Activated T-helper 2 cell treated with anti-CD3 and anti-CD28 coated beads, Interferon-gamma antibody, Interleukin-2, Interleukin-4, amounts not matched to agents 10 μg/mL and 5 μg/mL and 100 μg/mL, durations not matched to agents 14 hours and 24 hours and 36 hours (primary cell): ENCODE measurements at regions of chr17 and their contacts with region 1.

Region 1: GRCh38 chr17:80761110-80761871 is 216.7 kb downstream of the RPTOR start:
- DNase-seq: peak; percentile 73
- H3K4me3 Mint-ChIP-seq: peak overlapping the region; percentile 66
- H3K27ac Mint-ChIP-seq: peak overlapping the region; percentile 99
- H3K4me1 Mint-ChIP-seq: peaks cover 72% of the 10 kb centered on the region
- H3K27me3 Mint-ChIP-seq: no peaks in the 10 kb centered on the region

Region 2: DNA sequence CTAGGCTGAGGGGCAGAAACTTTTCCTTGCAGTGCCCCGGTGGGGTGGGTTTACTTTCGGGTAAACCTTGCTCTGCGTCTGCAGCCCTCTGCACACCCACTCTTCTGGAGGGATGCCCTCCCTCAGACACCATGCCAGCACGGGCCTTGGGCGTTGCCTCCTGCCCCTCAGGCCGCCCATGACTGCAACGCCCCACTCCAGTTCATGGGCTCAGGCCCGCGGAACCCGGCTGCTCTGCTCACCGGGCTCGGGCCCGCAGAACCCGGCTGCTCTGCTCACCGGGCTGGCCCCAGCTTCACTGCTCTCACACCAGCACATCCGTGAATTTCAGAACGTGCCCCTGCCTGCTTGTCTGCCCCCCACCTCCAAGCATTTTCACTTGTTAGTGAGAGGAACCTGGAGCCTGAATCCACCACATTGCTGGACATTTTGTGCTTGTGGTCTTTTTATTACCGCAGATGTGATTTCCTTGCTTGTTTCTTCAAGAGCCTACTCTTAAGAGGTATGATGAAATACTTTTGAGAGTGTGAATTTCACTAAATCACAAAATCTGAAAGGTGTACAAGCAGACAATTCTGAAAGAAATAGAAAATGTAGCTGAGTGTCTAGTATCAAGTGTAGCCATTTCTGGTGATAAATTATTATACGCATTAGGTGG is 85.7 kb before region 1 on chr17:
- intact Hi-C with region 1: loop called (anchors 2 kb)
- DNase-seq: no peak
- H3K4me3 Mint-ChIP-seq: no peak overlapping the region
- H3K27ac Mint-ChIP-seq: peak overlapping the region; percentile 4
- H3K4me1 Mint-ChIP-seq: peaks cover 64% of the 10 kb centered on the region
- H3K27me3 Mint-ChIP-seq: no peaks in the 10 kb centered on the region

Region 3: GRCh38 chr17:80720610-80721577 is 40.4 kb before region 1 on chr17:
- intact Hi-C with region 1: no loop called
- DNase-seq: peak; percentile 59
- H3K4me3 Mint-ChIP-seq: peak overlapping the region; percentile 2
- H3K27ac Mint-ChIP-seq: peak overlapping the region; percentile 77
- H3K4me1 Mint-ChIP-seq: peaks cover 48% of the 10 kb centered on the region
- H3K27me3 Mint-ChIP-seq: no peaks in the 10 kb centered on the region

Region 4: DNA sequence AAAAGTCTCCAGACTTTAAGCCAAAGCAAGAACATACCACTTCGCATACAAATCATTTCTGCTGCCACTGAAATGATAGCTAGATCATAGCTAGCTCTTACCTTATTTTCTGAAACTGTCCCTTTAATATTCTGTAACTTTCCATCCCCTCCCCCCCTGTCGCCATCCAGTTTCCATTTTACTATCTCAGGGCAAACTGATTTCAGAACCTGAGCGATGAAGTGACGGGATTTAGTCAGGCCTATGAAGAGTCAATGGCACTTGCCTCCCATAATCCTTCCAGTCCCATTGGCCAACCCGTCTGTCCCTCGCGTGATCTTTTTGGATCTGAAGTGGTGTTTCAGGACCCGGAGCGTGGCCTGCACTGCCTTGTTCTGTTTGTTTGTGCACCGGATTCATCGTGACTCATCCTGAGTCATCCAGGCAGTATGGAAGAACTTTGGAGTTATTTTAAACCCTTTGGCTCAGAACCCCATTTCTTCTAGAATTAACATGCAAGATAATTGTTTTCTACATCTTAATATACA is 30.5 kb after region 1 on chr17:
- intact Hi-C with region 1: loop called (anchors 1 kb)
- DNase-seq: peak; percentile 40
- H3K4me3 Mint-ChIP-seq: peak overlapping the region; percentile 73
- H3K27ac Mint-ChIP-seq: peak overlapping the region; percentile 92
- H3K4me1 Mint-ChIP-seq: peaks cover 72% of the 10 kb centered on the region
- H3K27me3 Mint-ChIP-seq: no peaks in the 10 kb centered on the region

Region 5: GRCh38 chr17:80832888-80833583 is 71.7 kb after region 1 on chr17:
- intact Hi-C with region 1: loop called (anchors 1 kb)
- DNase-seq: peak; percentile 83
- H3K4me3 Mint-ChIP-seq: peak overlapping the region; percentile 77
- H3K27ac Mint-ChIP-seq: peak overlapping the region; percentile 94
- H3K4me1 Mint-ChIP-seq: peaks cover 47% of the 10 kb centered on the region
- H3K27me3 Mint-ChIP-seq: no peaks in the 10 kb centered on the region

Region 6: GRCh38 chr17:80876950-80877728 is 115.8 kb after region 1 on chr17:
- intact Hi-C with region 1: loop called (anchors 1 kb)
- DNase-seq: peak; percentile 67
- H3K4me3 Mint-ChIP-seq: peak overlapping the region; percentile 67
- H3K27ac Mint-ChIP-seq: peak overlapping the region; percentile 88
- H3K4me1 Mint-ChIP-seq: peaks cover 54% of the 10 kb centered on the region
- H3K27me3 Mint-ChIP-seq: no peaks in the 10 kb centered on the region